K562 (cell line): ENCODE measurements at regions of chr19 and their contacts with region 1.

Region 1: GRCh38 chr19:14979476-14980255 is at the start of gene SLC1A6:
- DNase-seq: no peak
- ATAC-seq: no peak
- H3K4me3 ChIP-seq: no peak within 1 kb of the TSS
- H3K27ac ChIP-seq: no peak within 1 kb of the TSS
- H3K4me1 ChIP-seq: no peaks in the 10 kb centered on the region; a peak in 1 of 5 replicates
- H3K27me3 ChIP-seq: peaks cover 7 to 28% of the 10 kb centered on the region in 2 experiments
- CTCF ChIP-seq: no peak
- EP300 ChIP-seq: no peak
- POLR2A ChIP-seq: no peak
- RAD21 ChIP-seq: no peak
- polyA plus RNA-seq, gene SLC1A6: not detected

Region 2: GRCh38 chr19:15015946-15016542 is 36.4 kb after region 1 on chr19:
- CTCF ChIA-PET with region 1: no interaction called
- POLR2A ChIA-PET with region 1: no interaction called
- in situ Hi-C with region 1: no loop called
- intact Hi-C with region 1: no loop called
- DNase-seq: peak; percentile 59 to 70 (median 65)
- ATAC-seq: peak; percentile 31; the same call in 1 of the 3 replicates
- H3K4me3 ChIP-seq: no peak overlapping the region
- H3K27ac ChIP-seq: no peak overlapping the region
- H3K4me1 ChIP-seq: peaks cover 0 to 2% of the 10 kb centered on the region in 2 experiments; a peak in 1 of 5 replicates
- H3K27me3 ChIP-seq: no peaks in the 10 kb centered on the region; a peak in 1 of 5 replicates
- CTCF ChIP-seq: no peak
- EP300 ChIP-seq: no peak
- POLR2A ChIP-seq: no peak
- RAD21 ChIP-seq: no peak

Region 3: DNA sequence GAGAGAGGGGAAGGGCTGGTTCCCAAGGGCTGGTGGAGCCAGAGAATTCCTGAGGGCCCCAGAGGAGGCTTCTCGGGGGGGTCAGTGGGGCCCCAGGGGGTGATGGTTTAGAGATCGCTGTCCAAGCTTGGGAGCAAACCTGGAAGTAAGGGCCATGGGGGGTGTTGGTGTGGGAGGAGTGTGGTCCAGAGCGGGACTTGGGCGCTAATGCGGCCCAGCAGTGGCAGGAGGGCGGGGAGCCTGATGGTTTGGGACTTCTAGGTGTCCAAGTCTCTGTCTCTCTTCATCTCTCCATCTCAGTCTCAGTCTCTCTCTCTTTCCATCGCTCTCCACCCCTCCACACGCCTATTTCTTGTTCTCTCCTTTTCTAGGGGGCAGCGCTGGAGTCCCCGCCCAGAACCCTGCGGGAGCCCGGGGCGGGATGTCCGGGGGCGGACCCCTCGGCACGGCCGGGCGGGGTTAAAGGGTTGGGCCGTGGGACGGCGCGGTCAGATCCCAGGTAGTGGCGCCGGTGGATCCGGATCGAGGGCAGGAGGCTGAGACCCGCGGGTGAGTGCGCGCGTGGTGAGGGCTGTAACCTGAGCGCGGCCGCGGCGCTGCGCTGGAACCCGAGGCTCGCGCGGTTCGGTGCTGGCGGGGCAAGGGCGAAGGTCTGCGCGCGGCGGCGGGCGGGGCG is 528.5 kb after region 1 on chr19 and contains the start of gene CYP4F22:
- CTCF ChIA-PET with region 1: no interaction called
- POLR2A ChIA-PET with region 1: no interaction called
- in situ Hi-C with region 1: no loop called
- intact Hi-C with region 1: no loop called
- DNase-seq: peak; percentile 11 to 73 (median 42)
- ATAC-seq: peak; percentile 64
- H3K4me3 ChIP-seq: no peak within 1 kb of the TSS
- H3K27ac ChIP-seq: no peak within 1 kb of the TSS
- H3K4me1 ChIP-seq: peaks cover 0 to 15% of the 10 kb centered on the region in 2 experiments; a peak in 3 of 5 replicates
- H3K27me3 ChIP-seq: peaks cover 7 to 52% of the 10 kb centered on the region in 2 experiments; a peak in 4 of 5 replicates
- CTCF ChIP-seq: no peak
- EP300 ChIP-seq: no peak
- POLR2A ChIP-seq: no peak
- RAD21 ChIP-seq: no peak
- polyA plus RNA-seq, gene CYP4F22: not detected

Region 4: GRCh38 chr19:15684831-15685230 is 705.2 kb after region 1 on chr19:
- CTCF ChIA-PET with region 1: no interaction called
- POLR2A ChIA-PET with region 1: no interaction called
- in situ Hi-C with region 1: loop called (anchors 10 kb)
- intact Hi-C with region 1: no loop called
- DNase-seq: peak; percentile 23 to 50 (median 34)
- ATAC-seq: peak; percentile 65; the same call in 2 of the 3 replicates
- H3K4me3 ChIP-seq: no peak overlapping the region
- H3K27ac ChIP-seq: no peak overlapping the region
- H3K4me1 ChIP-seq: no peaks in the 10 kb centered on the region
- H3K27me3 ChIP-seq: no peaks in the 10 kb centered on the region; a peak in 1 of 5 replicates
- CTCF ChIP-seq: no peak
- EP300 ChIP-seq: no peak
- POLR2A ChIP-seq: no peak
- RAD21 ChIP-seq: no peak